Dorsolateral prefrontal cortex (tissue), 120 donors: ENCODE measurements at regions of chr3 and their contacts with region 1.

Region 1: DNA sequence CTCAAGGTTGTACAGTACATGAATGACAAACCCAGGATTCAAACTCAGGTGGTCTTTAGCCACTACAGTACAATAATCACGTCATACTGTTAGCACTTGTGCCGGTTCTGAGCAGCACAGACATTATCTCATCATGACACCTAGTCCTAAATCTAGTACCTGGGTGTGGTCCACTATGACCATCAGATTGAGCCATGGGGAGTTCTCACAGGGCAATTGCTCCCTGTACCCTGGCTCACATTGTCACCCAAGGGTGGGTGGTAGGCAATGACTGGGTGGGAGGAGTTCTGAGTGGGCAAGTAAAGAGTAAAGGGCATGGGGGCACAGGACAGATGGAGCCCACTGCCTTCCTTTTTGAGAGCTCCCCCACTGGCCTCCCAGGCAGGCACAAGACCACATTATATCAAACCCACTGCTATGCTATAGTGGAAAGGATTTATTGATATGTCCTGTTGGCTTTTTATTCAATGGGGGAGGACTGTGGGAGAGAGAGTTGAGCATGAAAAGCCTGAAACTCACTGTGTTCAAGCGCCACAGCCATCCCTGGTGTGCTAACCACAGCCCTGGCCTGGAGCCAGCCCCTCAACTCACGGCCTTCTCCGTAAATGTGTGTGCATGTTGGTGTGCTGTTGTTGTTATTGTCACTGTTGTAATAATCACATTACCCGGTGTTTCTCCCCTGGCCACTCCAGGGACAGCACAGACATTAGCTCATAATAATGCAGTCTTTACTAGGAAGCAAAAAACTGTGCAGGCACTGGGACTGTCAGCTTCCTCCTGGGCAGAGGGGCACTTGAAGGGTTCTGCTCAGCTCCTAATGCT is 27.3 kb downstream of the ADCY5 start:
- DNase-seq: peak in 5 of 10 donors; percentile 54 to 67 (median 62)
- H3K4me3 ChIP-seq: peak overlapping the region in 1 of 59 donors; percentile 12
- H3K27ac ChIP-seq: peak overlapping the region; percentile 6 to 99 (median 95)
- H3K27me3 ChIP-seq: no peaks in the 10 kb centered on the region
- CTCF ChIP-seq: no peak

Region 2: GRCh38 chr3:123444023-123444422 is 22.5 kb after region 1 on chr3:
- intact Hi-C with region 1: loop called (anchors 2 kb)
- DNase-seq: peak in 6 of 10 donors; percentile 53 to 88 (median 62)
- H3K4me3 ChIP-seq: peak overlapping the region in 55 of 59 donors; percentile 1 to 85 (median 61)
- H3K27ac ChIP-seq: peak overlapping the region; percentile 78 to 100 (median 95)
- H3K27me3 ChIP-seq: no peaks in the 10 kb centered on the region
- CTCF ChIP-seq: peak in 4 of 56 donors; percentile 11 to 24 (median 18)